Activated CD8-positive, alpha-beta T cell treated with anti-CD3 and anti-CD28 coated beads for 36 hours (primary cell): ENCODE measurements at regions of chr7 and their contacts with region 1.

Region 1: DNA sequence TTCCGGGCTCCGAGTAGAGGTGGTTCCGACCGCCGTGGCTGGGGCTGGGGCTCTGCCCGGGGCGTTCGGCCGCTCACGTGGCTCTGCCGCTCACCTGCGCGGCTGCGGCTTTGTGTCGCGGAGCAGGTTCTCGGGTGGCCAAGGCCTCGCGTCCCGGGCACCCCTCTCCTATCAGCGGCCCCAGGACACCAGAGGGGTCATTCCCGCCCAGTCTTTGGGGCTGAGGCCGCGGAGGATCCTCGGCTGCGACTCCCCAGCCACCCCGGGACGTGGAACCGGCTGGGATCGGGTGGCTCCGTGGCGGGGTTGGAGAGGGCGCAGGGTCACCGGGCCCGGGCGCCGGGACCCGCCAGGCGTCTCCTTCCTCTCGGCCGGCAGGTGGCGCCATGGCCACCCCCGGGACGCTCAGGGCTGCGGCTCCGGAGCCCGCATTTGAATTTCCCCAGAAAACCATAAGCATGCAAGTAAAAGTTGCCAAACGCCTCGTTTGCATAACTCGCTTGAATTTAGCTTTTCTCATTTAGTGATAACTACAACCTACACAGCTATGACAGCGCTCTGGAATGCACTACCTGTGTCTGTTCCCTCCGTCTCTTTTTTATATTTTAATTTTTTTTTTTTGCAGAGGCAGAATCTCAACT is 1.2 kb downstream of the COL26A1 start:
- DNase-seq: peak; percentile 77
- ATAC-seq: peak; percentile 91
- H3K4me3 Mint-ChIP-seq: no peak overlapping the region
- H3K27ac Mint-ChIP-seq: no peak overlapping the region
- H3K4me1 Mint-ChIP-seq: peaks cover 9% of the 10 kb centered on the region
- H3K27me3 Mint-ChIP-seq: peaks cover 14% of the 10 kb centered on the region
- CTCF ChIP-seq: peak; percentile 94

Region 2: GRCh38 chr7:101373812-101374614 is 10.2 kb after region 1 on chr7:
- CTCF ChIA-PET with region 1: interaction called, 17 read pairs
- POLR2A ChIA-PET with region 1: no interaction called
- intact Hi-C with region 1: no loop called
- DNase-seq: no peak
- ATAC-seq: no peak
- H3K4me3 Mint-ChIP-seq: no peak overlapping the region
- H3K27ac Mint-ChIP-seq: no peak overlapping the region
- H3K4me1 Mint-ChIP-seq: peaks cover 6% of the 10 kb centered on the region
- H3K27me3 Mint-ChIP-seq: peaks cover 2% of the 10 kb centered on the region
- CTCF ChIP-seq: no peak

Region 3: GRCh38 chr7:101402088-101402779 is 38.4 kb after region 1 on chr7:
- CTCF ChIA-PET with region 1: interaction called, 9 read pairs
- POLR2A ChIA-PET with region 1: no interaction called
- intact Hi-C with region 1: loop called (anchors 5 kb)
- DNase-seq: no peak
- ATAC-seq: no peak
- H3K4me3 Mint-ChIP-seq: no peak overlapping the region
- H3K27ac Mint-ChIP-seq: no peak overlapping the region
- H3K4me1 Mint-ChIP-seq: no peaks in the 10 kb centered on the region
- H3K27me3 Mint-ChIP-seq: peaks cover 2% of the 10 kb centered on the region
- CTCF ChIP-seq: no peak

Region 4: DNA sequence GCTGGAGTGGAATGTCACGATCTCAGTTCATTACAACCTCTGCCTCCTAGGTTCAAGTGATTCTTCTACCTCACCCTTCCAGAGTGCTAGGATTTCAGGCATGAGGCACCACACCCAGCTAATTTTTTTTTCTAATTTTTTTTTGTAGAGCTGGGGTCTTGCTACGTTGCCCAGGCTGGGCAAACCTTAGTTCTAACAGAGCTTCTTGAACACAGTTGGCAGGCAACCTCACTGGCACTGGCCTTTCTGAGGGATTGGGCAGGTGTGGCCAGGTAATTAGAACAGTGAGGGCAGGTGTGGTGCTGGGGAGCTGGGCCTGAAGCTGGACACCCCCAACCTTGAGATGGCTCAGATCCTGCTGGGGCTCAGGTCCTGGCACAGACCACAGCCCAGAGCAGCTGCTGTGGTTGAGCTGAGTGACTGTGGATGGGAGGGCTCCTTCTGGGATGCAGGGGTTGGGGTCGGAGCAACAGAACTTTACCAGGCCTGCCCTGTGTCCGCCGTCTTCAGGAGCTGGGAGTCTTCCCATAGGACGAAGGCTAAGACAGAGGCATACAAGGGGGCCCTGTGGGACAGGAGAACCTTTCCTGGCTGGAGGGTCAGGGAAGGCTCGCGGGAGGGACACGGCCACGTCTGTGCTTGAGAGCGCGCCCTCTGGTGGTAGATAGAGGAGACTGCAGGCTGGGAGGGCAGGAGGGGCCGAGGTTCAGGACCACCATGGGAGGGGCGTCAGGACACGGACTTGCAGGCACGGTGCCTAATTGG is 47.1 kb after region 1 on chr7:
- CTCF ChIA-PET with region 1: interaction called, 32 read pairs
- POLR2A ChIA-PET with region 1: no interaction called
- intact Hi-C with region 1: loop called (anchors 5 kb)
- DNase-seq: peak; percentile 60
- ATAC-seq: peak; percentile 90
- H3K4me3 Mint-ChIP-seq: no peak overlapping the region
- H3K27ac Mint-ChIP-seq: no peak overlapping the region
- H3K4me1 Mint-ChIP-seq: peaks cover 6% of the 10 kb centered on the region
- H3K27me3 Mint-ChIP-seq: peaks cover 1% of the 10 kb centered on the region
- CTCF ChIP-seq: peak; percentile 93

Region 5: GRCh38 chr7:101436857-101437576 is 73.2 kb after region 1 on chr7:
- CTCF ChIA-PET with region 1: interaction called, 23 read pairs
- POLR2A ChIA-PET with region 1: no interaction called
- intact Hi-C with region 1: no loop called
- DNase-seq: no peak
- ATAC-seq: no peak
- H3K4me3 Mint-ChIP-seq: no peak overlapping the region
- H3K27ac Mint-ChIP-seq: no peak overlapping the region
- H3K4me1 Mint-ChIP-seq: no peaks in the 10 kb centered on the region
- H3K27me3 Mint-ChIP-seq: peaks cover 14% of the 10 kb centered on the region
- CTCF ChIP-seq: no peak

Region 6: DNA sequence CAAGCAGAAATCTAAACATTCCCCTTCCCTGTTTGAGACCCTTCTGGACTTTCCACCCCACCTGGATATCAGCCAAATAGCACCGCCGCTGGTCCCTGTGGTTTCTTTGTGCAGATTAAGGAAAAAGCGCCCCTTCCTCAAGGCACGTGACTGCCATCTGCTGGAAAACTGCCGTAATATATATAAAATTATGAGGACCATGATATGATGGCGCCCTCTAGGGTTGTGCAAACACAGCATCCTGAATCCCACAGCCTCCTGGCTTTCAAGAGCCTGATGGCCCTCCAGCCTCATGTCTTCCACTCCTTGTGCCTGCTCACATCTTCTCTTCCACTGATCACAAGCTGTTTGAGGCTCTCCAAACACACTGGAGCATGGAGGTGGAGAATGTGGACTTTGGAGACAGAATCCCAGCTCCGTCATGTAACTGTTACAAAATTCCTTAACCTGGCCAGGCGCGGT is 144.0 kb after region 1 on chr7:
- CTCF ChIA-PET with region 1: interaction called, 22 read pairs
- POLR2A ChIA-PET with region 1: no interaction called
- intact Hi-C with region 1: loop called (anchors 2 kb)
- DNase-seq: peak; percentile 70
- ATAC-seq: peak; percentile 73
- H3K4me3 Mint-ChIP-seq: no peak overlapping the region
- H3K27ac Mint-ChIP-seq: no peak overlapping the region
- H3K4me1 Mint-ChIP-seq: peaks cover 7% of the 10 kb centered on the region
- H3K27me3 Mint-ChIP-seq: peaks cover 13% of the 10 kb centered on the region
- CTCF ChIP-seq: peak; percentile 93